ENCODE measurements at regions of chr13 and their contacts with region 1.

Region 1: DNA sequence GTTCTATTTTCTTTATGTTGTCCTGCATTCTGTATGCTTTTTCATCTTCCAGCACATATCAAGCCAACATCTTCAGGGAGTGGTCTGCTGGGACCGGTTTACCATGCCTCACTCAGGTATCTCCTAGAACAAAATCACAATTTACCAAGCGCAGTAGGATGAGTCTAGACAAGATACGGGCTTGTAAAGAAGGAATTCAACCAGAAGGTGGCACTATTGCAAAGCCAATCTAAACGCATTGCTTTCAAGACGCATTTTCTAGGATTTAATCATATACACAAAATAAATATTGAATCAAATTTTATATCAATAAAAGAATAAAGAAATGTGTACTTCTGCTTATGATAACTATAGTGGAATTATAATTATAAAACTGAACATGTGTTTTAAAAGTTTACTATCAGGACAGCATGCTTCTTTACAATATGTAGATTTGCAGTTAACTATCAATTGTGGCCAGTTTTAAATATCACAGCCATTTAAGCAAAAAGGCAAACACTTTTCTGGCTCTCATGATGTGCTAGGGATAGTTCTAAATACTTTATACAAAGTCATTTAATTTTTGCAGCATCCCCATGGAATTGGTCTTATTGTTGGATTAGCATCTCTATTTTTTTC is 16.1 kb upstream of the TPP2 start:
- DNase-seq: no peak
- ATAC-seq: peak; percentile 62 to 90 (median 77)
- H3K4me3 ChIP-seq: no peak overlapping the region
- H3K27ac ChIP-seq: no peak overlapping the region
- H3K4me1 ChIP-seq: peaks cover 4% of the 10 kb centered on the region
- H3K27me3 ChIP-seq: no peaks in the 10 kb centered on the region
- CTCF ChIP-seq: peak; percentile 76

Region 2: GRCh38 chr13:102452831-102453230 is 127.8 kb before region 1 on chr13:
- intact Hi-C with region 1: no loop called
- DNase-seq: no peak
- ATAC-seq: no peak
- H3K4me3 ChIP-seq: no peak overlapping the region
- H3K27ac ChIP-seq: no peak overlapping the region
- H3K4me1 ChIP-seq: no peaks in the 10 kb centered on the region
- H3K27me3 ChIP-seq: no peaks in the 10 kb centered on the region
- CTCF ChIP-seq: no peak

Region 3: DNA sequence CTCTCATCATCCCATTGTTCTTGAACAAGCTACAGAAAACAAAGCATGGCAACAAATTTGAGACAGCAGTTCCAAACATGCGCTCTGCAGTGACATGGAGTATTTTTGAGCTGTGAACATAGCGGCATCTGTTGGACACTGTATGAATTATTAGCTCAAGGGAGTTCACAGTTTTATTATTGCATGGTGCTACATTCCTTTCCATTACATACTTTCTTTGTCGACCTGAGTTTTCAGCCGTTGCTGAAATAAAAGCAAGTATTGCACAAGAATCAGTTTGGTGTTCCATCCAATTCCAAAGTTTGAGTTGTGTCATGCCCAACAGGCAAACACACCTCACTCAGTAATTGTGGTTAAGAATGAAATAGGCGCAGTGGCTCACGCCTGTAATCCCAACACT is 144.3 kb after region 1 on chr13:
- intact Hi-C with region 1: loop called (anchors 2 kb)
- DNase-seq: no peak
- ATAC-seq: peak; percentile 60 to 73 (median 66)
- H3K4me3 ChIP-seq: no peak overlapping the region
- H3K27ac ChIP-seq: no peak overlapping the region
- H3K4me1 ChIP-seq: peaks cover 6% of the 10 kb centered on the region
- H3K27me3 ChIP-seq: no peaks in the 10 kb centered on the region
- CTCF ChIP-seq: peak; percentile 63

Region 4: DNA sequence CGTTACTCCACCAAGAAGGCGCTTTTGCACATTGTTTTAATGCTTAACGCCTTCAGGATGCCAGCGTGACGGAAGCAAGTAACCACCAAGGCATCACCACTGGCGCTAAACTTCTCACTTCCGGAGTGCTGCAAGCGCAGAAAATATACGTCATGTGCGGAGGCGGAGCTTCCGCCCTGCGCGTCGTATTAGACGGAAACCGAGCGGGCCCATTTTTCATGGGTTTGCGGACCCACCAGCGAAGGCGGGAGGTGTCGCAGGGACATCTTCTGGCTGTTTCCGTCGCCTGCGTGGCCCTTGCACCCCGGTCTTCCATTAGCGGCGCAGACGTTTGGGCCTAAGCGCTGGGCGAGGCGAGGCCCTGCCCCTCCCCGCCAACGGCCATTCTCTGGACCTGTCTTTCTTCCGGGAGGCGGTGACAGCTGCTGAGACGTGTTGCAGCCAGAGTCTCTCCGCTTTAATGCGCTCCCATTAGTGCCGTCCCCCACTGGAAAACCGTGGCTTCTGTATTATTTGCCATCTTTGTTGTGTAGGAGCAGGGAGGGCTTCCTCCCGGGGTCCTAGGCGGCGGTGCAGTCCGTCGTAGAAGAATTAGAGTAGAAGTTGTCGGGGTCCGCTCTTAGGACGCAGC is 265.1 kb after region 1 on chr13 and contains the start of gene ERCC5:
- intact Hi-C with region 1: loop called (anchors 2 to 5 kb)
- DNase-seq: peak; percentile 94 to 97
- ATAC-seq: peak; percentile 93 to 95 (median 94)
- H3K4me3 ChIP-seq: peak within 1 kb of the TSS; percentile 82
- H3K27ac ChIP-seq: peak within 1 kb of the TSS; percentile 94
- H3K4me1 ChIP-seq: peaks cover 9% of the 10 kb centered on the region
- H3K27me3 ChIP-seq: no peaks in the 10 kb centered on the region
- CTCF ChIP-seq: no peak
- total RNA-seq, gene ERCC5: 21.0 to 31.0 (median 27.4) TPM

Region 5: DNA sequence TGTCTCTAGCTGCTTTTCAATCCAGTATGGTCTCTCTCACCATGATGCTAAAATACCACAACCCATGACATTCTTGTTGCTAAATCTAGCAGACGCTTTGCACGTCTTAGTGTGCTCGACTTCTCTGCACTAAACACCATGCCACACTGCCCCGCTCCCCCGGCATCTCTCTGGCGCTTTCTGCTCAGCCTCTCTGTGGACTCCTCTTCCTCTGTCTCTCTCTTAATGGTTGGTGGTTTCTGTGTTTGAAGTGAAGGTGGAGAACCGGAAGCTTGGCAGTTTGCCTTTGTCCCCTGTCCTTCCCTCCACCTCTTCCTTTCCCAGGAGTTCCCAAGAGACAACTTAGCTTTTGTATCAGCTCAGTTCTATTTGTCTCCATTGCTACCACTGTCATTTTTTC is 274.0 kb after region 1 on chr13:
- intact Hi-C with region 1: loop called in 1 of 2 experiments (anchors 5 kb)
- DNase-seq: no peak
- ATAC-seq: no peak
- H3K4me3 ChIP-seq: no peak overlapping the region
- H3K27ac ChIP-seq: no peak overlapping the region
- H3K4me1 ChIP-seq: peaks cover 9% of the 10 kb centered on the region
- H3K27me3 ChIP-seq: no peaks in the 10 kb centered on the region
- CTCF ChIP-seq: no peak